Mammary epithelial cell (primary cell): ENCODE measurements at regions of chr6 and their contacts with region 1.

Region 1: GRCh38 chr6:160238751-160239402 is 19.7 kb downstream of the SLC22A2 start:
- DNase-seq: peak; percentile 53
- H3K4me3 ChIP-seq: no peak overlapping the region
- H3K27ac ChIP-seq: peak overlapping the region; percentile 62
- H3K4me1 ChIP-seq: peaks cover 22% of the 10 kb centered on the region
- H3K27me3 ChIP-seq: no peaks in the 10 kb centered on the region
- CTCF ChIP-seq: no peak

Region 2: GRCh38 chr6:159968440-159969203 is 270.3 kb before region 1 on chr6 and contains the start of gene IGF2R:
- CTCF ChIA-PET with region 1: no interaction called
- dilution Hi-C with region 1: no loop called
- in situ Hi-C with region 1: no loop called
- intact Hi-C with region 1: loop called (anchors 5 kb)
- DNase-seq: peak; percentile 86
- H3K4me3 ChIP-seq: peak within 1 kb of the TSS; percentile 70 to 88 (median 77)
- H3K27ac ChIP-seq: peak within 1 kb of the TSS; percentile 92
- H3K4me1 ChIP-seq: peaks cover 35% of the 10 kb centered on the region
- H3K27me3 ChIP-seq: no peaks in the 10 kb centered on the region
- CTCF ChIP-seq: no peak
- total RNA-seq, gene IGF2R: 120 to 171 TPM

Region 3: GRCh38 chr6:160348142-160349019 is 109.5 kb after region 1 on chr6 and contains the start of gene SLC22A3:
- CTCF ChIA-PET with region 1: no interaction called
- dilution Hi-C with region 1: no loop called
- in situ Hi-C with region 1: no loop called
- intact Hi-C with region 1: loop called (anchors 5 kb)
- DNase-seq: peak; percentile 31
- H3K4me3 ChIP-seq: peak within 1 kb of the TSS; percentile 31 to 70 (median 55)
- H3K27ac ChIP-seq: no peak within 1 kb of the TSS
- H3K4me1 ChIP-seq: peaks cover 6% of the 10 kb centered on the region
- H3K27me3 ChIP-seq: no peaks in the 10 kb centered on the region
- CTCF ChIP-seq: peak in 1 of 2 donors; percentile 43
- total RNA-seq, gene SLC22A3: 0.33 to 1.4 TPM

Region 4: GRCh38 chr6:160379464-160379863 is 140.6 kb after region 1 on chr6:
- CTCF ChIA-PET with region 1: no interaction called
- dilution Hi-C with region 1: no loop called
- in situ Hi-C with region 1: no loop called
- intact Hi-C with region 1: loop called (anchors 5 kb)
- DNase-seq: peak; percentile 71
- H3K4me3 ChIP-seq: no peak overlapping the region
- H3K27ac ChIP-seq: peak overlapping the region; percentile 63
- H3K4me1 ChIP-seq: peaks cover 26% of the 10 kb centered on the region
- H3K27me3 ChIP-seq: no peaks in the 10 kb centered on the region
- CTCF ChIP-seq: no peak